ENCODE measurements at regions of chr14 and their contacts with region 1.

Region 1: GRCh38 chr14:69191340-69192111 is at the start of gene EXD2:
- DNase-seq: peak; percentile 92
- H3K4me3 Mint-ChIP-seq: peak within 1 kb of the TSS; percentile 94
- H3K27ac Mint-ChIP-seq: peak within 1 kb of the TSS; percentile 95
- H3K4me1 Mint-ChIP-seq: peaks cover 6% of the 10 kb centered on the region
- H3K27me3 Mint-ChIP-seq: no peaks in the 10 kb centered on the region
- CTCF ChIP-seq: no peak
- total RNA-seq, gene EXD2: 17.7 and 18.7 TPM in 2 replicates

Region 2: GRCh38 chr14:69153131-69153872 is 38.2 kb before region 1 on chr14:
- CTCF ChIA-PET with region 1: interaction called, 4 read pairs
- POLR2A ChIA-PET with region 1: interaction called, 58 read pairs
- intact Hi-C with region 1: loop called (anchors 2 kb)
- DNase-seq: peak; percentile 93
- H3K4me3 Mint-ChIP-seq: peak overlapping the region; percentile 90
- H3K27ac Mint-ChIP-seq: no peak overlapping the region
- H3K4me1 Mint-ChIP-seq: peaks cover 20% of the 10 kb centered on the region
- H3K27me3 Mint-ChIP-seq: no peaks in the 10 kb centered on the region
- CTCF ChIP-seq: no peak

Region 3: DNA sequence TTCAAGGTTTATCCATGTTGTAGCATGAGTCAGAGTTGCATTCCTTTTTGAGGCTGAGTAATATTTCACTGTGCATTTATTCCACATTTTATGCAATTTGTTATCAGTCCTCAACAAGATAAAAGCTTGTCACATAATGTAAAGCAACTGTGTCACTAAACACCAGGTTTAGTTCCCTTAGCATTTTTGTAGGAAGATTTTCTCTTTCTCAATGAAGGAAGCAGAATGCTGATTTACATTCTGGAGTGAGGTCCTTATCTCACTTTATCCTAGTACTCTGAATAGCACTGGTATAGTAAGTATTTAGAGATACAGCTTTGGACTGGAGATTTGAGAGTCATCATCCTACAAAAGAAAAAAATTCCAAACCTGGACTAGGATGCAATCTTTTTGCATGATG is 10.0 kb before region 1 on chr14:
- CTCF ChIA-PET with region 1: no interaction called
- POLR2A ChIA-PET with region 1: interaction called, 14 read pairs
- intact Hi-C with region 1: no loop called
- DNase-seq: no peak
- H3K4me3 Mint-ChIP-seq: no peak overlapping the region
- H3K27ac Mint-ChIP-seq: no peak overlapping the region
- H3K4me1 Mint-ChIP-seq: no peaks in the 10 kb centered on the region
- H3K27me3 Mint-ChIP-seq: no peaks in the 10 kb centered on the region
- CTCF ChIP-seq: no peak

Region 4: GRCh38 chr14:69204753-69205152 is 13.2 kb after region 1 on chr14:
- CTCF ChIA-PET with region 1: interaction called, 4 read pairs
- POLR2A ChIA-PET with region 1: interaction called, 14 read pairs
- intact Hi-C with region 1: no loop called
- DNase-seq: no peak
- H3K4me3 Mint-ChIP-seq: no peak overlapping the region
- H3K27ac Mint-ChIP-seq: no peak overlapping the region
- H3K4me1 Mint-ChIP-seq: no peaks in the 10 kb centered on the region
- H3K27me3 Mint-ChIP-seq: no peaks in the 10 kb centered on the region
- CTCF ChIP-seq: no peak

Region 5: GRCh38 chr14:69398053-69398817 is 206.7 kb after region 1 on chr14 and contains the starts of genes ERH and SLC39A9:
- CTCF ChIA-PET with region 1: no interaction called
- POLR2A ChIA-PET with region 1: interaction called, 11 read pairs
- intact Hi-C with region 1: no loop called
- DNase-seq: peak; percentile 97
- H3K4me3 Mint-ChIP-seq: peak within 1 kb of the TSS; percentile 89
- H3K27ac Mint-ChIP-seq: peak within 1 kb of the TSS; percentile 99
- H3K4me1 Mint-ChIP-seq: peaks cover 26% of the 10 kb centered on the region
- H3K27me3 Mint-ChIP-seq: no peaks in the 10 kb centered on the region
- CTCF ChIP-seq: no peak
- total RNA-seq, gene ERH: 245 and 279 TPM in 2 replicates
- total RNA-seq, gene SLC39A9: 69.7 and 71.3 TPM in 2 replicates